ENCODE measurements at regions of chr3 and their contacts with region 1.

Region 1: GRCh38 chr3:194333212-194333980 is 17.7 kb downstream of the CPN2 start:
- DNase-seq: peak; percentile 86
- H3K4me3 Mint-ChIP-seq: peak overlapping the region; percentile 73
- H3K27ac Mint-ChIP-seq: no peak overlapping the region
- H3K4me1 Mint-ChIP-seq: peaks cover 13% of the 10 kb centered on the region
- H3K27me3 Mint-ChIP-seq: peaks cover 21% of the 10 kb centered on the region

Region 2: GRCh38 chr3:194265483-194265892 is 67.9 kb before region 1 on chr3:
- intact Hi-C with region 1: no loop called
- DNase-seq: no peak
- H3K4me3 Mint-ChIP-seq: no peak overlapping the region
- H3K27ac Mint-ChIP-seq: no peak overlapping the region
- H3K4me1 Mint-ChIP-seq: peaks cover 6% of the 10 kb centered on the region
- H3K27me3 Mint-ChIP-seq: peaks cover 14% of the 10 kb centered on the region

Region 3: GRCh38 chr3:194344012-194344411 is 10.6 kb after region 1 on chr3:
- intact Hi-C with region 1: loop called (anchors 1 kb)
- DNase-seq: peak; percentile 48
- H3K4me3 Mint-ChIP-seq: no peak overlapping the region
- H3K27ac Mint-ChIP-seq: no peak overlapping the region
- H3K4me1 Mint-ChIP-seq: peaks cover 7% of the 10 kb centered on the region
- H3K27me3 Mint-ChIP-seq: peaks cover 15% of the 10 kb centered on the region

Region 4: DNA sequence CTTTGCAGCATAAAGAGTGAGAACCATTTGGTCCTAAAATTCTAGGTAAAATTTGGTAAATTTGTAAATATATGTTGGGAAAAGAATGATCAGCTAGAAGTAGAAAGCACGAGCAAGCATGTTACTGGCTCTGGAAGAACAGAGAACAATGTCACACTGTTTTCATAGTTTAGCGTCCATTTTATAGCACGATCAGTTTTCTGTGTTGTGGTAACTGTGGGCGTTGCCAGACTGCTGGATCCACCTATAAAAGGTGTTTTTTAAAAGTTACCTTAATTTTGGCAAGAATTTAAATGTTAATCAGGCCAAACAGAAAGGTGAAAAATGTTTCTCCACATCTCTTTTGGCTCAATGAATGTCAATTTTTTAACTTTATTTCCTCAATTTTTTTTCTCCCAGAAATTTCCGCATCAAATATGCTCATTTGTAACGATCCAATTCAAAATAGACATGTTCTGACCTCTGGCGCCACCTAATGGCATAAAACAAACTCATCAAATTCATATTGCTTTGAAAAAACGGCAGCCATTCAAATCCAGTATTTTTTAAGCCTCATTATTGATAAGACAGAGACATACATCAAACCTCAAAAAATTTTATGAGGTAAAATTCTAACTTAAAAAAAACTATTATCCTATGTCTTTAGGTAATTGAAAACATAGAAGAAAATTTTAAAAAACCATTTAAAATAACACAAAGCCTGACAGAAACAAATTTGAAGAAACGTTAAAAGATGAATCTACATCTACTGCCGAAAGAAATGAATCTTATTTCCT is 71.2 kb after region 1 on chr3:
- intact Hi-C with region 1: loop called (anchors 1 kb)
- DNase-seq: no peak
- H3K4me3 Mint-ChIP-seq: no peak overlapping the region
- H3K27ac Mint-ChIP-seq: no peak overlapping the region
- H3K4me1 Mint-ChIP-seq: peaks cover 23% of the 10 kb centered on the region
- H3K27me3 Mint-ChIP-seq: peaks cover 2% of the 10 kb centered on the region

Region 5: DNA sequence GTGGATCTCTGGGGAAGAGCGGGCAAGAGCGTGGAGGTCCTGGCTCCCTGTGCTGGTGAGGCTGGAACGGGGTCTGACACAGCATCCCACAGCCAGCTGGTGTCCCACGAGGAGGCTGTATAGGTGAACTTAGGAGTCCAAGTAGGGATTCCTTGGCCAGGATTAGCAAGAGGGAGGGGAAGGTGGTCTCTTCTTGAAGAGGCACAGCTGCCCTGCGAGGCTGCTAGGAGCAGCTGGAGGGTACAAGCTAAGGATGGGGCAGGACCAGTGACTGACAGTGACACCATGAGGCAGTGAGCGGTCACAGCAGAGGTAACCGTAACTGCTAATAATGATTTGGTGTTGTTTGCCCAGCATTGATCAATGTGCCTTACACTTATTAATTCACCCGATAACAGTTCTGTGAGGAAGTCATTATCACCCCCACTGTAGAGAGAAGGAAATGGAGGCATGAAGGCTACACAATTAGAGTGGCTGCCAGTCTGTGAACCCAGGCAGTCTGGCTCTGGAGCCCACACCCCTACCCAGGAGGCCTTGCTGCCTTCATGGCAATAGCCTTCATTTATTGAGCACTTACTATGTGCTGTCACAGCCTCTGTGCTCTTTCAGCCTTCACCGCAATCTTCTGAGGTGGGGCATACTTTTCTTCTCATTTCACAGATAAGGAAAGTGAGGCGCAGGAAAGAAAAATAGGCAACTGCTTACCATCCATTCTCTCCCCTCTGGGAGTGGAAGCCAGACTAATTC is 240.5 kb after region 1 on chr3:
- intact Hi-C with region 1: loop called (anchors 5 kb)
- DNase-seq: no peak
- H3K4me3 Mint-ChIP-seq: no peak overlapping the region
- H3K27ac Mint-ChIP-seq: no peak overlapping the region
- H3K4me1 Mint-ChIP-seq: peaks cover 18% of the 10 kb centered on the region
- H3K27me3 Mint-ChIP-seq: peaks cover 20% of the 10 kb centered on the region

Region 6: GRCh38 chr3:194632809-194633348 is 299.5 kb after region 1 on chr3:
- intact Hi-C with region 1: loop called (anchors 1 kb)
- DNase-seq: no peak
- H3K4me3 Mint-ChIP-seq: peak overlapping the region; percentile 80
- H3K27ac Mint-ChIP-seq: no peak overlapping the region
- H3K4me1 Mint-ChIP-seq: no peaks in the 10 kb centered on the region
- H3K27me3 Mint-ChIP-seq: peaks cover 5% of the 10 kb centered on the region